Tibial artery (tissue), 4 donors: ENCODE measurements at regions of chr4 and their contacts with region 1.

Region 1: DNA sequence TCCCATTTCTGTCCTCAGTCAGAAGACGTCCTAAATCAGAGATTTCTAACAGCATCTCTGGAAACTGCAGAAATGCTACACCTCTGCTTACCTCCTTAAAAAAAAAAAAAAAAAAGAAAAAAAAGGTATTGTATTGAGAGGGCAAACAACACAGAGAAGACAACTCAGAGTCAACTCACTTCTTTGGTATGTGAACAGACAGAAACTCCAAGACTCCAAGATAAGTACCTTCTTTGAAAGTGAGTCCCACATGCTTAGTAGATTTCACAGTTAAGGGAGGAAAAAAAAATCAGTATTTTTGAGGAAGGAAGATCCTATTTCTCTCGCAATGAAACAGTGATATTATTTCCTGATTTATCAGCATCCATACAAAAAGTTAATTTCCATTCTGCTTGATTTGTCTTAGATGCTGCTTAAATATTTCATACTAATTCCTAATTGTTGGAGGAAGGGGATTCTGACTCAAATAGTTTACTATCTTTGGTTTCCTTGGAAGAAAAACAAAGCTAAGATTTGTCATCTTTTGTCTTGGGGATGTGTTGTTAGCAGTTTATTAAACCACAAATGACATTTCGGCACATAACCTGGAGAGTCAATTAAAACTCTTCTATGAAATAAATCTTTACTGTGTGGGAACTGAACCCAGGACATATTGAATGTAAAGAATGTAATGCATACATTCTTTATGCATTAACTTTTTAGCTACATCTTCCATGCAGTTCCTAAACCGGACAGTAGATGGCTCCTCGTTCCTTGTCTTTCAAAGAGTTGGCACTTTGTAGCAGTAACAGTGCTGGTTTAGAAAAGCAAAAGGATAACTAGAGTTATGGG is 4.7 kb downstream of the RASGEF1B start:
- DNase-seq: peak in 1 of 2 donors; percentile 67
- H3K4me3 ChIP-seq: no peak overlapping the region
- H3K27ac ChIP-seq: no peak overlapping the region
- H3K4me1 ChIP-seq: peaks cover 0 to 19% (median 4%) of the 10 kb centered on the region in 4 donors
- H3K27me3 ChIP-seq: no peaks in the 10 kb centered on the region
- CTCF ChIP-seq: peak; percentile 89 to 93

Region 2: GRCh38 chr4:81106150-81106549 is 360.9 kb before region 1 on chr4:
- intact Hi-C with region 1: no loop called
- DNase-seq: no peak
- H3K4me3 ChIP-seq: no peak overlapping the region
- H3K27ac ChIP-seq: no peak overlapping the region
- H3K4me1 ChIP-seq: no peaks in the 10 kb centered on the region
- H3K27me3 ChIP-seq: no peaks in the 10 kb centered on the region
- CTCF ChIP-seq: no peak

Region 3: GRCh38 chr4:81844717-81845116 is 377.7 kb after region 1 on chr4:
- intact Hi-C with region 1: loop called (anchors 2 kb)
- DNase-seq: peak; percentile 77 to 84
- H3K4me3 ChIP-seq: no peak overlapping the region
- H3K27ac ChIP-seq: no peak overlapping the region
- H3K4me1 ChIP-seq: no peaks in the 10 kb centered on the region
- H3K27me3 ChIP-seq: no peaks in the 10 kb centered on the region
- CTCF ChIP-seq: peak; percentile 64 to 78

Region 4: DNA sequence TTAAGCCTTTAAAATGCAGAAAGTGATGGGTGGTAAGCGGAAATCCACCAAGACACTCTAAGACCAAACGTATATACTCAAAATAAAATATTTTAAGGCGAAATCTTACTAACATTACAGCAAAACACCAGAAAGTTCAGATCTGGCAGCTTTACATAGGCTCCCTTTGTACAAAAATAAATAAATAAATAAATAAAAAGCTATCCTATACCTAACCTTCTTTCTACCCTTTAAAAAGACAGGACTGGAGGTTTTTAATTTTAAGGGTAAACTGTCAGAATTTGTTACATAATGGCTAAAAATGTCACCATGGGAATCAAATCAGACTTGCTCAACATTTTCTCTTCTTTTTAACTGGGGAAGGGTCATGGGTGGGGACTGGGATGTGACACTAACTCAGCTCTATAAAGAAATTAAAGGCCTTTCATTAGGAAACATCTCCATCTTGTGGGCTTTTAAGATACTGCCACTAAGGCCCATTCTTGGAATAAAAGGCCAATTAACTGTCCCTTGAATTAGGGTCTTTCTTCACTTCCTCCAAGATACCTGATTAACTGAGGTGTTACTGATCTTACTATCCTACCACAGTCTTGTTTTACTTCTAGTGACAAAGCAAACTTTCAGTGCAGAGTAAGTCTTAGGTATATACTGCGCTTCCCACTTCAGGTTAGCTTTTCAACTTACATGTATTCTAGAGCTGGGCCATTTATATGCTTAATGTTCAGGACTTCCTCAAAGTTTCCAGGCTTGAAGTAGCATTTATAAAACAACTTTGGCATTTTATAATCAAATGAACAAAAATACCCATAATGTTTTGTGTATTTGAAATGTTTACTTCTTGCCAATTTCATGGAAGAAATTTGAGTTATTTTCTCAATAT is 893.5 kb after region 1 on chr4:
- intact Hi-C with region 1: loop called (anchors 10 kb)
- DNase-seq: no peak
- H3K4me3 ChIP-seq: no peak overlapping the region
- H3K27ac ChIP-seq: peak overlapping the region in 1 of 2 donors; percentile 5
- H3K4me1 ChIP-seq: peaks cover 0 to 78% (median 29%) of the 10 kb centered on the region in 4 donors
- H3K27me3 ChIP-seq: no peaks in the 10 kb centered on the region
- CTCF ChIP-seq: peak; percentile 52 to 58